ENCODE measurements at regions of chr10 and their contacts with region 1.

Region 1: DNA sequence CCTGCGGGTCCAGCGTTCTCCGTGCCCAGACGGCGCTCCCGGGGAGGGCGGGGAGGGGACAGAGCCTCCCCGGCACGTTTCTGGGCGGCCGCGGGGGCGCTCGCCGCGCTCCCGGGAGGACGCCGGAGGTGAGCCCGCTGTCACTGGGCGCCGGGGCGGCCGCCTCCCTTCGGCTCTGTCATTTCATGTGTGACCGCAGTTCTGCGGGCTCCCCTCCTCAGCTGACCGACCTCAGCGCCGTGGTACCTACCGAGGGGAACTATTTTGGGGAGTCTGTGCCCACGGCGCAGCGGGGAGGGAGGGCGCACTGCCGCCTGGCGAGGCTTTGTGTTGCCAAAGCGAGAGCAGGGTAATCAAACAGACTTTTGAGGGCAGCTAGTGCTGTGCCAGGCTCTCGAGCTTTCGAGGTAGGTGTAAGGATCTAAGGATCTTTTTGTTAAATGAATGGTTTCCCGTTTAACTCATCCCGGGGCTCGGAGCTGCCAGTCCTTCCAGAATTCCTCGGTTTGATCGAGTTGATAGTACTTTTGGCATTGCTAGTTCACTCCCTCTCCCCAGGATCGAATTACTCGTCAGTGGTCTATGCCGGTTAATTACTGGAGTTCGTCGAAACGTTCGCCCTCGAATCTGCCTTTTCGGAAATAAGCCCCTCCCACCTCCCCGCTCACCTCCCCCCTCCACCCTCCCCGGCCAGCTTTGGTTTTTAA is 1.9 kb downstream of the ARID5B start:
- DNase-seq: no peak
- H3K4me3 ChIP-seq: peak overlapping the region; percentile 26 to 79 (median 65)
- H3K27ac ChIP-seq: peak overlapping the region; percentile 59
- H3K4me1 ChIP-seq: peaks cover 28% of the 10 kb centered on the region
- H3K27me3 ChIP-seq: no peaks in the 10 kb centered on the region
- CTCF ChIP-seq: peak; percentile 5 to 18
- POLR2A ChIP-seq: no peak

Region 2: DNA sequence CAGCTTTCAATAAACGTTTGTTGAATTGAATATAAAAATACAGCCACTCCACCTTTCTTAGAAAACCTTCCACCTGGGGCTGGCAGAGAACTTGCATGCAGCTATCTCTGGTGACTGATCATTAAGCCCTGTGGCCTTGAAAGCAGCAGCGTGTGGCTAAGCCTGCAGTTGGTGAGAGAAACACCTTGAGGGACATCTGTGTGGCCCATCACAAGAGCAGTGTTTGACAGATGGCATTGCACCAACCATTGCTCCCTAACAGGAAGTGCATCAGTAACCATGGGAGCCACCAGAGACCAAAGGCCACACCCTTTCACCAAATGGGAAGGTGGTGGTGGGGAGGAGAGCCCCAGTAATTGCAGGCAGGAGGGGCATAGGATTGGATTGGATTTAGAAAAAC is 981.7 kb before region 1 on chr10:
- CTCF ChIA-PET with region 1: no interaction called
- POLR2A ChIA-PET with region 1: no interaction called
- dilution Hi-C with region 1: no loop called
- intact Hi-C with region 1: no loop called
- DNase-seq: no peak
- H3K4me3 ChIP-seq: no peak overlapping the region
- H3K27ac ChIP-seq: no peak overlapping the region
- H3K4me1 ChIP-seq: no peaks in the 10 kb centered on the region
- H3K27me3 ChIP-seq: no peaks in the 10 kb centered on the region
- CTCF ChIP-seq: no peak
- POLR2A ChIP-seq: no peak

Region 3: DNA sequence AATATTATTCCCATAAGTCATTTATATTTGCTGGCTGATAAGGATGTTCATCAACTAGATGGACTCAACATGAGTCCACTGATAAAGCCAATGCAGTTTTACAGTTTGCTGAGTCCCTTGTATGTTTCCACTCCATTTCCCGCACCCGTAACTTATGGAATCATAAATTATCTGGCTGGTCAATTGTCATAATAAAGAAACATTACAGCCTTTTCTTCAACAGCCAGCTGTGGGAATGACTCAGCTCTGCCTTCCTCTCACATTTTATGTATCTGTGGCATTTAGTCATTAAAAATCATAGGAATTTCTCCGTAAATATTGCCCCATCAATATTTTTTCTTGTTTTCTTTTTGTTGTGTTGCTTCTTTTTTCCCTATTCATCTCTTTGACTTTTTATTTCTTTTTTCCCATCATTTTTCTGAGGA is 427.9 kb before region 1 on chr10:
- CTCF ChIA-PET with region 1: no interaction called
- POLR2A ChIA-PET with region 1: no interaction called
- dilution Hi-C with region 1: no loop called
- intact Hi-C with region 1: no loop called
- DNase-seq: peak; percentile 94
- H3K4me3 ChIP-seq: no peak overlapping the region
- H3K27ac ChIP-seq: peak overlapping the region; percentile 55
- H3K4me1 ChIP-seq: peaks cover 26% of the 10 kb centered on the region
- H3K27me3 ChIP-seq: no peaks in the 10 kb centered on the region
- CTCF ChIP-seq: no peak
- POLR2A ChIP-seq: no peak

Region 4: GRCh38 chr10:61750929-61751471 is 152.4 kb before region 1 on chr10:
- CTCF ChIA-PET with region 1: interaction called, 49 read pairs
- POLR2A ChIA-PET with region 1: interaction called, 4 read pairs
- dilution Hi-C with region 1: no loop called
- intact Hi-C with region 1: no loop called
- DNase-seq: peak; percentile 58
- H3K4me3 ChIP-seq: no peak overlapping the region
- H3K27ac ChIP-seq: no peak overlapping the region
- H3K4me1 ChIP-seq: peaks cover 18% of the 10 kb centered on the region
- H3K27me3 ChIP-seq: no peaks in the 10 kb centered on the region
- CTCF ChIP-seq: peak; percentile 82 to 86
- POLR2A ChIP-seq: no peak

Region 5: DNA sequence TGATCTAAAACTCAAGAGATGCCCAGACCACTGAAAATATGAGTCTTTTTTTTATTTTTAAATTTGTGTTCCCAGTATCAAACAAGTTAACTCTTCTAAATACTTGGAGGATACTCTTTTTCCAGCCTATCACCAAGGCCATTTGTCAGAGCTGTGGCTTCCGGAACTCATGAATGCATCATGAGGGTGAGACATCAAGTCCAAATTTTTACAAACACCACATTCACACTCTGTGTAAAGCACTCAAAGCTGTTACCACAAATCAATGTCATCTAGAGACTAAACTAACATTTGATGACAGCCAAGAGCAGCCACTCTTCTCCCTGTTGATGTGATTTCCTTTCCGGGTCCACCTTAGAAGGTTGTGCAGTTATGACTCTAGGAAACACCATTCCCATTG is 45.6 kb before region 1 on chr10:
- CTCF ChIA-PET with region 1: no interaction called
- POLR2A ChIA-PET with region 1: no interaction called
- dilution Hi-C with region 1: no loop called
- intact Hi-C with region 1: no loop called
- DNase-seq: no peak
- H3K4me3 ChIP-seq: no peak overlapping the region
- H3K27ac ChIP-seq: no peak overlapping the region
- H3K4me1 ChIP-seq: no peaks in the 10 kb centered on the region
- H3K27me3 ChIP-seq: no peaks in the 10 kb centered on the region
- CTCF ChIP-seq: no peak
- POLR2A ChIP-seq: no peak

Region 6: GRCh38 chr10:61943674-61944410 is 40.5 kb after region 1 on chr10:
- CTCF ChIA-PET with region 1: interaction called, 22 read pairs
- POLR2A ChIA-PET with region 1: interaction called, 3 read pairs
- dilution Hi-C with region 1: no loop called
- intact Hi-C with region 1: loop called (anchors 1 kb)
- DNase-seq: peak; percentile 80
- H3K4me3 ChIP-seq: peak overlapping the region in 1 of 3 experiments; percentile 66
- H3K27ac ChIP-seq: peak overlapping the region; percentile 58
- H3K4me1 ChIP-seq: peaks cover 32% of the 10 kb centered on the region
- H3K27me3 ChIP-seq: no peaks in the 10 kb centered on the region
- CTCF ChIP-seq: peak in 1 of 2 donors; percentile 18
- POLR2A ChIP-seq: no peak

Region 7: GRCh38 chr10:62016623-62017490 is 113.5 kb after region 1 on chr10:
- CTCF ChIA-PET with region 1: interaction called, 3 read pairs
- POLR2A ChIA-PET with region 1: no interaction called
- dilution Hi-C with region 1: no loop called
- intact Hi-C with region 1: loop called (anchors 5 kb)
- DNase-seq: peak; percentile 36
- H3K4me3 ChIP-seq: no peak overlapping the region
- H3K27ac ChIP-seq: no peak overlapping the region
- H3K4me1 ChIP-seq: peaks cover 18% of the 10 kb centered on the region
- H3K27me3 ChIP-seq: no peaks in the 10 kb centered on the region
- CTCF ChIP-seq: no peak
- POLR2A ChIP-seq: no peak

Region 8: DNA sequence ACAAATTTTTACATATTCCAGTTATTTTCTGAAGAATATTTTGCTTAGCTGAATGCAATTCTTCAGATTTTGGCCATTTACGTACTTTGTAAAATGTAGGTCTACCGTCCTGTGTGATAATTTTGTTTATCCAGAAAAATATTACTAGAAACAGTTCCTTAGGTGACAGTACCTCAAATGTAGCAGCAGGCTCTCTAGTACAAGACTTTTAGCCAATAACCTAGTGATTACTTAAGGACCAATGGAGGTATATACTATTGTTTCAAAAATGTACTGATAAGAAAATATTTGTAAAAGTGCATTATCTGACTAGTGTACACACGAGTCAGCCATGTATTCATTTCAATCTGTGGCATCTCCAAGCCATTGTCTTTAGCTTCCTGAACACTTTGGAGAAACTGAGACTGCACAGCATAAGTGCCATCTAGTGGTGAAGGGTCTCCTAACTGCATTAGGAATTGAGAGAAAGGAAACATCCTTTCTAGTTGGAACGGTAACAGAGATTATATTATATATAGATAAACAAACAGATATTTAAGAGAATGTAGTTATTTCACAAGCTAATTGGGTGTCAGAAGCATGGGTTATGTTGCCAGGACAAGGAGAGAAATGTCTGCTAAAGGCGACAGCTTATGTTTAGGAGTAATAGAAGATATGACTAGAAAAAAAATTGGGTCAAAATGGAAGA is 341.6 kb after region 1 on chr10:
- CTCF ChIA-PET with region 1: interaction called, 15 read pairs
- POLR2A ChIA-PET with region 1: no interaction called
- dilution Hi-C with region 1: no loop called
- intact Hi-C with region 1: no loop called
- DNase-seq: peak; percentile 86
- H3K4me3 ChIP-seq: no peak overlapping the region
- H3K27ac ChIP-seq: no peak overlapping the region
- H3K4me1 ChIP-seq: peaks cover 17% of the 10 kb centered on the region
- H3K27me3 ChIP-seq: no peaks in the 10 kb centered on the region
- CTCF ChIP-seq: peak; percentile 63 to 71
- POLR2A ChIP-seq: no peak

Region 9: DNA sequence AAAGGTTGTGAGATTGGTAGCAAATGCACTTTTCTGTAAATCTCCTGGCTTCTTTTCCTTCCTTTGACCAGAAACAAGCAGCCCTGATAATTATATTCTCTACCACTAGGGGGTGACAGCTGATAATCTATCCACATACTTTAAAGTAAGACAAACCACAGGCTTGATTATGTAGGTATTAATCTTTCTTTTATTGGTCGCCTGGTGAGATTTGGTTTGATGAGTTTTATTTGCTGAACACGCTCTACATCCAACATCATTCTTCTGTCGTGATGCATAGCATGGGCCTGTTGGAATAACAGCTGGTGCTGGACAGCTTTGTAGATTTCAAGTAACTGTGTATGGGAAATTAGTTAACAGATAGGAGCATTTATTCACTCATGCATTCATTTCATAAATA is 534.3 kb after region 1 on chr10:
- CTCF ChIA-PET with region 1: no interaction called
- POLR2A ChIA-PET with region 1: no interaction called
- dilution Hi-C with region 1: no loop called
- intact Hi-C with region 1: loop called (anchors 10 kb)
- DNase-seq: peak; percentile 73
- H3K4me3 ChIP-seq: no peak overlapping the region
- H3K27ac ChIP-seq: no peak overlapping the region
- H3K4me1 ChIP-seq: peaks cover 14% of the 10 kb centered on the region
- H3K27me3 ChIP-seq: no peaks in the 10 kb centered on the region
- CTCF ChIP-seq: peak; percentile 54 to 58
- POLR2A ChIP-seq: no peak

Measured in endothelial cell of umbilical vein (primary cell).